ENCODE measurements at regions of chr10 and their contacts with region 1.

Region 1: DNA sequence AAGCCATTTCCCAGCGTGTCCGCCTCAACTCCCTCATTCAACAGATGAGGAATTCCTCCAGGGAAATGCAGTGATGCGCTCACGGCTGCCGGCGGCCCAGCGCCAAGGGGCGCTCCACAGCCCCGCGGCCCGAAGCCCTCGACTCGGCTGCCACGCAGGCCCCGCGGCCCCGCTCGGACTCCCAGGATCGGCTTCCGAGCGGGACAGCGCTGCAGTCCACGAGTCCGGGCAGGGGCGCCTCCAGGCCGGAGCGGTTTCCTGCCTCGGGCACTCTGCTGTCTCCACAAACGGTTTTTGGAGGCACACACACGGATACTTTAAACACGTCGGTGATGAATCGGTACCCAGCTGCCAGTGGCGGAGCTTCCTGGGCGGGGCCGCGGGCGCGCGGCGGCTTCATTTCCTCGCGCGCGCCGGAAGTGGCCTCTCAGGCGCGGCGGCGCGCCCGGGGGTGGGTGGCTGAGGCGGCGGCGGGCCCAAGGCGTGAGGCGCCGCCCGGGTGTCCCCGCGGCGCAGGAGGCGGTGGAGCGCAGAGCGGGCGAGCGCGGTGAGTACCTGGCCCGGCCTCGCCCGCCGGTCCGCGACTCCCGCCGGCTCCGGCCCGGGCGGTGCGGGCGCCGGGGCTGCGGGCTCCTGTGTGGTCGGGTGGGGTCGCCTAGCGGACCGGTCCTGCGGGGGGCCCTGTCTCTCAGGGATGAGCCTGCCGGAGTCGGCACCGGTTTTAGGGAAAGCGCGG is at the start of gene CSGALNACT2:
- DNase-seq: peak; percentile 91 to 94
- ATAC-seq: peak; percentile 74 to 90 (median 83)
- H3K4me3 ChIP-seq: peak within 1 kb of the TSS; percentile 69
- H3K4me3 Mint-ChIP-seq: peak within 1 kb of the TSS; percentile 98
- H3K27ac ChIP-seq: peak within 1 kb of the TSS; percentile 90
- H3K27ac Mint-ChIP-seq: peak within 1 kb of the TSS; percentile 93 to 96
- H3K4me1 ChIP-seq: peaks cover 34% of the 10 kb centered on the region
- H3K4me1 Mint-ChIP-seq: peaks cover 77 to 78% of the 10 kb centered on the region in 2 donors
- H3K27me3 ChIP-seq: no peaks in the 10 kb centered on the region
- H3K27me3 Mint-ChIP-seq: no peaks in the 10 kb centered on the region
- CTCF ChIP-seq: no peak
- total RNA-seq, gene CSGALNACT2: 49.9 to 57.4 (median 52.8) TPM

Region 2: GRCh38 chr10:42836768-42837468 is 301.3 kb before region 1 on chr10:
- intact Hi-C with region 1: no loop called
- DNase-seq: no peak
- ATAC-seq: no peak
- H3K4me3 ChIP-seq: no peak overlapping the region
- H3K4me3 Mint-ChIP-seq: no peak overlapping the region
- H3K27ac ChIP-seq: no peak overlapping the region
- H3K27ac Mint-ChIP-seq: no peak overlapping the region
- H3K4me1 ChIP-seq: peaks cover 3% of the 10 kb centered on the region
- H3K4me1 Mint-ChIP-seq: no peaks in the 10 kb centered on the region
- H3K27me3 ChIP-seq: peaks cover 2% of the 10 kb centered on the region
- H3K27me3 Mint-ChIP-seq: peaks cover 18 to 32% of the 10 kb centered on the region in 2 donors
- CTCF ChIP-seq: no peak

Region 3: DNA sequence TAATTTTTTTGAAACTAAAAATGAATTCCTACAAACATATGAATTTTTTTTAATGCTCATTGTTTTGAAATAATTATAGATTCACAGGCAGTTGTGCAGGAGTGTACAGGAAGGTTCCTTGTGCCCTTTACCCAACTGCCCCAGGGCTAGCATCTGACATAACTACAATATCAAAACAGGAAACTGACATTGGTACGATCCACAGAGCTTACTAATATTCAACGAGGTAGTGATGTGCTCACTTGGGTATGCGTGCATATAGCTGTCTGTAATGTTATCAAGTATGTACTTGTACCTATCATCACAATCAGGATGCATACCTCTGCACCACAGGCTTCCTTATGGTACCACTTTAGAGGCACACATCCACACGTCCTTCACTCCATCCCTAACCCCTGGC is 287.3 kb before region 1 on chr10:
- intact Hi-C with region 1: no loop called
- DNase-seq: no peak
- ATAC-seq: no peak
- H3K4me3 ChIP-seq: no peak overlapping the region
- H3K4me3 Mint-ChIP-seq: no peak overlapping the region
- H3K27ac ChIP-seq: no peak overlapping the region
- H3K27ac Mint-ChIP-seq: no peak overlapping the region
- H3K4me1 ChIP-seq: no peaks in the 10 kb centered on the region
- H3K4me1 Mint-ChIP-seq: no peaks in the 10 kb centered on the region
- H3K27me3 ChIP-seq: no peaks in the 10 kb centered on the region
- H3K27me3 Mint-ChIP-seq: peaks cover 29 to 51% of the 10 kb centered on the region in 2 donors
- CTCF ChIP-seq: no peak

Region 4: DNA sequence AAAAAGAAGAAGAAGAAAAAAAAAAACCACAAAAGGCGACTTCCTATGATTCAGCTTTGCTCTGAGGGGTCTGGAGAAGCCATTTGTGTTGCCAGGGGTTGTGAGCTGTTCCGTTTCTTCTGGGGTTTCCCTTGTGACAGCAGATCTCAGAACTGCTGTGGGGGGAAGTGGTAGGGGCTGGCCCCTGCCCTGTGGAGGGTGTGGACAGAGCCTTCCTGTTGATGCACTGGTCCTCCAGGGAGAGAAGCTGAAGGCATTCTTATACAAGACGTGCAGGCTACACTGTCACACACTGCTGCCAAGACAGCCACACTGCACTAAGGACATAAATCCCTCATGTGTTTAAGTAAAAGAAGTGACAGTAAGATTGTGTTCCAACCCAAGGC is 17.3 kb before region 1 on chr10:
- intact Hi-C with region 1: loop called (anchors 1 kb)
- DNase-seq: peak; percentile 61 to 71
- ATAC-seq: peak; percentile 95 to 99 (median 97)
- H3K4me3 ChIP-seq: no peak overlapping the region
- H3K4me3 Mint-ChIP-seq: peak overlapping the region; percentile 76
- H3K27ac ChIP-seq: peak overlapping the region; percentile 75
- H3K27ac Mint-ChIP-seq: peak overlapping the region; percentile 90 to 95
- H3K4me1 ChIP-seq: peaks cover 34% of the 10 kb centered on the region
- H3K4me1 Mint-ChIP-seq: peaks cover 25 to 34% of the 10 kb centered on the region in 2 donors
- H3K27me3 ChIP-seq: no peaks in the 10 kb centered on the region
- H3K27me3 Mint-ChIP-seq: no peaks in the 10 kb centered on the region
- CTCF ChIP-seq: no peak

Region 5: DNA sequence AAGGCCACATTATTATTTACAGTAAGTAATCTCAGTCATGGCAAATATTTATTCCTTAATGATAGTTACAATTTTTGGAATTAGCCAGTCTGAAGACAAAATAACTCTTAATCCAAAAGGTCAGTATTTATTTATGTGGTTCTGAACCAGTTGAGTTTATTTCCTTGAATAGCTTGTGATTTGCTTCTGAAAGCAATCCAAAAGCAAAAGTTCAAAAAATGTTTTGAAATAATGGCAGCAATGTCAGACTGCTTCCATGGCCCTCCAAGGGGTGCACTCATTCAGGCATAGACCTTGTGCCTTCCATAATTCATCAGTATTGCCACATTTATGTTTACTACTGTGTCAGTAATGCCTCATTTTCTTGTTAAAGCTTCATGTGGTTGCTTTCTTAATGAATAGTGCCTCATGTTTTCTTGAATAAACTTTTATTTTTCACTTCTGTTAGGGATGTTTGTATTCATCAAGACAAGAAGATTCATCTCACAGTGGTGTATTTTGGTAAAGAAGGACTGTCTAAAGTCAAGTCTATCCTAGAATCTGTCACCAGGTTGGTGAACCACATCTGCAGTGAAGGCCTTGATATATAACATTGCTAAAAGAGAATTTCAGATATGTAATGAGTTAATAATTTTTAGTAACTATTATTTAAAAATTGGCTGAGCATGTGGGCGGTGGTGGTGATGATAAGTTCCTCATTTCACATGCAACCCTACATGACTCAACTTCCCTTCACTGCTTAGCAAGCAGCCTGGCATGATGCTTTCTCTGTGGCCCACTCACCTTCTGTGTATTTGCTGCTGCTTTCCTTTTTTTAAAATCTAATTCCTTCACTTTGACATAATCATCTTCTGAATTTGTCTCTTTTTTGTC is 22.1 kb after region 1 on chr10:
- intact Hi-C with region 1: loop called (anchors 2 kb)
- DNase-seq: no peak
- ATAC-seq: peak in 1 of 3 donors; percentile 47
- H3K4me3 ChIP-seq: no peak overlapping the region
- H3K4me3 Mint-ChIP-seq: peak overlapping the region; percentile 3
- H3K27ac ChIP-seq: no peak overlapping the region
- H3K27ac Mint-ChIP-seq: peak overlapping the region; percentile 65 to 71
- H3K4me1 ChIP-seq: peaks cover 27% of the 10 kb centered on the region
- H3K4me1 Mint-ChIP-seq: peaks cover 62 to 69% of the 10 kb centered on the region in 2 donors
- H3K27me3 ChIP-seq: no peaks in the 10 kb centered on the region
- H3K27me3 Mint-ChIP-seq: no peaks in the 10 kb centered on the region
- CTCF ChIP-seq: no peak

Region 6: DNA sequence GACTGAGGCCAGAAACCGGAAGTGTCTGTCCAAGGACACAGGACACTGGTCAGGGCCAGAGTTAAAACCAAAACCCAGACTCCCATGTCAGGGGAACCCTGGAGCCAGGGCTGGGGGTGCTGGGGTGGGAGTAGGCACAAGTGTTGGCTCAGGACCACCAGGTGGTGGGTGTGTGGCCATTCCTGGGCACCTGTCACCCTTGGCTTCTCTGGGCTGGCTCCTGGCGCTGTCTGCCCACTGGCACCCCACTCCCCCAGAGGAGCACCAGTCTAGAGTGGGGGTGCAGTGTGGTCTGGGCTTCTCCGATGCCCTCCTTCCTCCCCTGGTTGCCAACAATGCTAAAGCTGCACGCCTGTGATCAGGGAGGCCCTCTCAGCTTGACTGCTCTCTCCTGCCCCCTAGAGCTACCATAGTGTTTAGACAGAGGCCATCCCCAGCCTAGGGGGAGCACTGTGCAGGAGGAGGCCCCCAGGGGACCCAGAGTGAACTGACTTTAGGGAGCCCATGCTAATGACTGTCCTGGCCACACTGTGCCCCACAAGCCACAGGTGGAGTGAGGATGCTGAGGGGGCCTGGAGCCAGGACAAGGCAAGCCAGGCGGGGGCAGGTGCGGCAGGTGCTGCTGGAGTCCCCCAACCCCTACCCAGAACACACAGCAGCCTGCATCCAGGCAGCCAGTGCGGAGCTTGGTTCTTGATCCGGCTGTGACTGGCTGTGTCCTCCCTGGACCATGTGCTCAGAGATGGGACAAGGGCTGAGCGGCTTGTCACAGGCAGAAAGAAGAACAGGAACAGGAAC is 117.6 kb after region 1 on chr10:
- intact Hi-C with region 1: loop called (anchors 2 kb)
- DNase-seq: peak; percentile 36 to 73
- ATAC-seq: peak; percentile 68 to 75 (median 72)
- H3K4me3 ChIP-seq: no peak overlapping the region
- H3K4me3 Mint-ChIP-seq: peak overlapping the region; percentile 55
- H3K27ac ChIP-seq: peak overlapping the region; percentile 74
- H3K27ac Mint-ChIP-seq: peak overlapping the region; percentile 48 to 86
- H3K4me1 ChIP-seq: peaks cover 58% of the 10 kb centered on the region
- H3K4me1 Mint-ChIP-seq: peaks cover 27 to 57% of the 10 kb centered on the region in 2 donors
- H3K27me3 ChIP-seq: no peaks in the 10 kb centered on the region
- H3K27me3 Mint-ChIP-seq: no peaks in the 10 kb centered on the region
- CTCF ChIP-seq: peak; percentile 67

Region 7: DNA sequence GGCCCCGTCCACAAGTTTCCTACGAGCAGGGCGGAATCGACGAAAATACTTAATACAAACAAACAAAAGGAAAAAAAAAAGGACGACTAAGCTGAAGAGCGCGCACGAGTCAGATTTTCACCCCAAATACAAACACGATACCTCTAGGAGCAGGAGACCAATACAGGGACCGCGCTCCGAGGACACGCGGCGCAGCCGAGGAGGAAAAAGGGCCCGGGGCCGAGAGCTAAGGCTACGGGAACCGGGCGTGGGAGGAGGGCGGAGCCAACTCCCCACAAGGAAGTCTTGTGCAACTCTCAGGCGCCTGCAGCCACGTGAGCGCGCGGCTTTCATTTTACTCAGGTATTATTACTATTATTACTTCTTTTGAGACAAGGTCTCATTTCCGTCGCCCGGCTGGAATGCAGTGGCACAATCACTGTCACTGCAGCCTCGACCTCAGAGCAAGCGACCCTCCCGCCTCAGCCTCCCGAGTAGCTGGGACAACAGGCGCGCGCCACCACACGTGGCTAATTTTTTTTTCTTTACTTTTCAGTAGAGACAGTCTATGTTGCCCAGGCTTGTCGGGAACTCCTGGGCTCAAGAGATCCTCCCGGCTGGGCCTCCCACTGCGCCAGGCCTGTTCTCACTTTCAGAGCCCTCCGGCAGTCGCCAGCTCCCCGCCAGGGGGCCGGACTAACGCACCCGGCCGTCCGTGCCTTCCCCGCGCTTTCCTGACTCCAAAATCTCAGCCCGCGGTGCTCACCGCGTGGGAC is 269.6 kb after region 1 on chr10:
- intact Hi-C with region 1: loop called (anchors 5 kb)
- DNase-seq: peak; percentile 80 to 95
- ATAC-seq: peak; percentile 32 to 60 (median 39)
- H3K4me3 ChIP-seq: peak overlapping the region; percentile 96
- H3K4me3 Mint-ChIP-seq: peak overlapping the region; percentile 99
- H3K27ac ChIP-seq: peak overlapping the region; percentile 99
- H3K27ac Mint-ChIP-seq: peak overlapping the region; percentile 99
- H3K4me1 ChIP-seq: peaks cover 56% of the 10 kb centered on the region
- H3K4me1 Mint-ChIP-seq: peaks cover 42 to 47% of the 10 kb centered on the region in 2 donors
- H3K27me3 ChIP-seq: no peaks in the 10 kb centered on the region
- H3K27me3 Mint-ChIP-seq: no peaks in the 10 kb centered on the region
- CTCF ChIP-seq: no peak

Measured in natural killer cell (primary cell).